Activated naive CD8-positive, alpha-beta T cell treated with anti-CD3 and anti-CD28 coated beads, Interleukin-2, amount 10 ng/mL, durations not matched to agents 7 days and 5 days (primary cell): ENCODE measurements at regions of chr19 and their contacts with region 1.

Region 1: GRCh38 chr19:12945479-12946091 is at the start of gene RAD23A:
- DNase-seq: peak; percentile 100
- ATAC-seq: peak; percentile 78
- H3K4me3 Mint-ChIP-seq: peak within 1 kb of the TSS; percentile 97
- H3K27ac Mint-ChIP-seq: peak within 1 kb of the TSS; percentile 99
- H3K4me1 Mint-ChIP-seq: peaks cover 39% of the 10 kb centered on the region
- H3K27me3 Mint-ChIP-seq: no peaks in the 10 kb centered on the region
- total RNA-seq, gene RAD23A: 128 to 141 TPM

Region 2: DNA sequence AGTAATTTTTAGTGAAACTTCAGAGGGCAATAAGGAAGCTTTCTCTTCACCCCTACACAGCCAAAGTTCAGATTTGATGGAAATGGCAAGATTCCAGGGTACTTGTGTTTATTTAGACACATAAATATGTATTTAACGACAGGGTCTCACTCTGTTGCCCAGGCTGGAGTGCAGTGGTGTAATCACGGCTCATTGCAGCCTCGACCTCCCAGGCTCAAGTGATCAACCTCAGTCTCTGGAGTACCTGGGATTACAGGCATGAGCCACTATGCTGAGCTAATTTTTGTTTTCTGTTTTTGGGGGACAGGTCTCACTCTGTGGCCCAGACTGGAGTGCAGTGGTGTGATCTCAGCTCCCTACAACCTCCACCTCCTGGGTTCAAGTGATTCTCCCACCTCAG is 24.5 kb before region 1 on chr19:
- POLR2A ChIA-PET with region 1: no interaction called
- DNase-seq: no peak
- ATAC-seq: no peak
- H3K4me3 Mint-ChIP-seq: no peak overlapping the region
- H3K27ac Mint-ChIP-seq: peak overlapping the region; percentile 60
- H3K4me1 Mint-ChIP-seq: peaks cover 10% of the 10 kb centered on the region
- H3K27me3 Mint-ChIP-seq: no peaks in the 10 kb centered on the region

Region 3: DNA sequence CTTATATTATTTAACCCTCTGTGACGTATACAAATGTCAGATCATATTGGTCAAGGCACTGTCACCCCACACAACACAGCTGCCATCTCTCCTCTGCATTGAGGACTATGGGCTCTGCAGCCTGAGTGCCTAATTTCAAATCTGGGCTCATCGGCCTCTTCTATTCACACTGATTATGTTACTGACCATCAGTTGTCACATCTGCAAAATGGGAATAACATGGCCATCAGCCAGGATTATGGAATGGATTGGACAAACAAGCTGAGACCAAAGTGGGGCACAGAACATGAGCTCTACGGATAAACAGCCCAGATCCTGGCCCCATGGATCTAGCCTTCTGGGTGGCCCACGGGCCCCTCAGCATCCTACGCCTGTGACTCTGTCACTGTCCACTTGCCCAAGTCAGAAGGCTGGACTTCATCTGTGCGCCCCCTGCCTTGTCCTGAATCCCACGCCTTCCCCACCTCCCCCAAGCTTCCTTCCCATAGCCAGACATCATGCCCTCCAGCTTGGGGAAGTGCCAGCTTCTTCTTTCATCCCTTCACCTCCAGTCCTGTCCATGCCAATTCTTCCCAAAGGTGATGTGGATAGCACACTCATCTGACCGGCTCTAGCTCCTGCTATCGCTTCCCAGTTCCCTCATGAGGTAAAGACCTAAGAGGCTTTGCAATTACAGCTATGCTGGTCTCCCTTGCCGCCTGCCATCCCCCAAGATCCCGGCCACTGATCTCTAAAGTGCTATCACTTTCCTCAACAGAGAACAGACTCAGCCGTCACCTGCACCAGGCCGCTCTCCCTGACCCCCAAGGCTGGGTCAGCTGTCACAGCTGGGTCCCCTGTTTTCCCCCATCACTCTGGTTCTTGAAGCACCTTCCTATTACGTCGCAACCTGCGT is 12.9 kb before region 1 on chr19:
- POLR2A ChIA-PET with region 1: interaction called, 13 read pairs
- DNase-seq: no peak
- ATAC-seq: no peak
- H3K4me3 Mint-ChIP-seq: peak overlapping the region; percentile 98
- H3K27ac Mint-ChIP-seq: peak overlapping the region; percentile 97
- H3K4me1 Mint-ChIP-seq: peaks cover 33% of the 10 kb centered on the region
- H3K27me3 Mint-ChIP-seq: no peaks in the 10 kb centered on the region

Region 4: GRCh38 chr19:12956446-12957388 is 11.1 kb after region 1 on chr19 and contains the start of gene GADD45GIP1:
- POLR2A ChIA-PET with region 1: interaction called, 10 read pairs
- DNase-seq: peak; percentile 88
- ATAC-seq: peak; percentile 95
- H3K4me3 Mint-ChIP-seq: peak within 1 kb of the TSS; percentile 95
- H3K27ac Mint-ChIP-seq: peak within 1 kb of the TSS; percentile 97
- H3K4me1 Mint-ChIP-seq: peaks cover 18% of the 10 kb centered on the region
- H3K27me3 Mint-ChIP-seq: no peaks in the 10 kb centered on the region
- total RNA-seq, gene GADD45GIP1: 18.4 to 19.4 TPM

Region 5: GRCh38 chr19:12994701-12995595 is 49.4 kb after region 1 on chr19 and contains the start of gene NFIX:
- POLR2A ChIA-PET with region 1: no interaction called
- DNase-seq: peak; percentile 76
- ATAC-seq: peak; percentile 48
- H3K4me3 Mint-ChIP-seq: peak within 1 kb of the TSS; percentile 89
- H3K27ac Mint-ChIP-seq: peak within 1 kb of the TSS; percentile 67
- H3K4me1 Mint-ChIP-seq: peaks cover 5% of the 10 kb centered on the region
- H3K27me3 Mint-ChIP-seq: peaks cover 34% of the 10 kb centered on the region
- total RNA-seq, gene NFIX: 1.5 to 2.5 TPM